ENCODE measurements at regions of chr9 and their contacts with region 1.

Region 1: DNA sequence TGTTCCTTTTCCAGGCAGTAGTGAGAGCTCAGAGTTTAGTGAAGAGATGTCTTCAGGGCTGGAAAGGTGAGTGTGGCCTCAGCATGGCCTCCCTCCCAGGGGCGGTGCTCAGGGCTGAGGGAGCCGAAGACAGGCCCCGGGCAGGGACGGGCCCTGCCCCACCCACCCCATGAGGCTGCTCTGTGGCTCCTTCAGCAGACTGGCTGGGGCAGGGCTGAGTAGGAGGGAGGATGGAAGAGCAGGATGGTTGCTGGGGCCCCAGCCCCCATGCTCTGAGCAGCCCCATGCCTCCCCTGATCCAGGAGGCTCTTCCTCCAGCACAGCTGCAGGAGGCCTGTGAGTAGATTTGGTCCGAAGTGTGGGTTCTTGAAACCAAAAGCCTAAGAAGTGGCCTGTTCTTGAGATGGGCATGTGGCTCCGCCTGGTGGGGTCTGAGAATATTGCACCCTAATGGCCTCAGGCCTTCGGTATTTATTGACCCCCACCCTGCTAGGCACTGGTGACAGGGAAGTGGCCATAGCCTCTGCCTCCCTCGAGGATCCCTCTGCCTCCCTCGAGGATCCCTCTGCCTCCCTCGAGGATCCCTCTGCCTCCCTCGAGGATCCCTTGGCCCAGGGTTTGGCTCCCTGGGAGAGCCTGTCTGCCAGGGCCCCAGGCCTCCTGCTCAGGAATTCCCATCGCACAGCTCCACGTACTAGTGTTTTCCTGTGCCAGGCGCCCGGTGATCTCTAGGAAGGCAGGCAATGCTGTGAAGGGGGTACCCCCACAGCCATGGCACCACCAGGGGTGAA is 65.4 kb upstream of the GARNL3 start:
- DNase-seq: peak; percentile 61 to 86 (median 72)
- ATAC-seq: peak; percentile 72
- H3K4me3 ChIP-seq: no peak overlapping the region
- H3K4me3 Mint-ChIP-seq: no peak overlapping the region
- H3K27ac ChIP-seq: no peak overlapping the region
- H3K27ac Mint-ChIP-seq: no peak overlapping the region
- H3K4me1 ChIP-seq: peaks cover 17% of the 10 kb centered on the region
- H3K4me1 Mint-ChIP-seq: peaks cover 10% of the 10 kb centered on the region
- H3K27me3 ChIP-seq: peaks cover 4 to 5% of the 10 kb centered on the region in 2 experiments
- H3K27me3 Mint-ChIP-seq: peaks cover 28% of the 10 kb centered on the region
- CTCF ChIP-seq: peak; percentile 88

Region 2: GRCh38 chr9:126939821-126940221 is 259.4 kb before region 1 on chr9:
- CTCF ChIA-PET with region 1: interaction called, 34 read pairs
- POLR2A ChIA-PET with region 1: interaction called, 4 read pairs
- intact Hi-C with region 1: loop called (anchors 1 kb)
- DNase-seq: no peak
- ATAC-seq: no peak
- H3K4me3 ChIP-seq: no peak overlapping the region
- H3K4me3 Mint-ChIP-seq: no peak overlapping the region
- H3K27ac ChIP-seq: no peak overlapping the region
- H3K27ac Mint-ChIP-seq: no peak overlapping the region
- H3K4me1 ChIP-seq: peaks cover 2% of the 10 kb centered on the region
- H3K4me1 Mint-ChIP-seq: peaks cover 6% of the 10 kb centered on the region
- H3K27me3 ChIP-seq: peaks cover 3 to 4% of the 10 kb centered on the region in 2 experiments
- H3K27me3 Mint-ChIP-seq: peaks cover 13% of the 10 kb centered on the region
- CTCF ChIP-seq: no peak

Region 3: GRCh38 chr9:126965541-126966428 is 233.4 kb before region 1 on chr9:
- CTCF ChIA-PET with region 1: interaction called, 6 read pairs
- POLR2A ChIA-PET with region 1: no interaction called
- intact Hi-C with region 1: loop called (anchors 1 kb)
- DNase-seq: peak; percentile 27 to 73 (median 40)
- ATAC-seq: peak; percentile 69
- H3K4me3 ChIP-seq: no peak overlapping the region
- H3K4me3 Mint-ChIP-seq: no peak overlapping the region
- H3K27ac ChIP-seq: no peak overlapping the region
- H3K27ac Mint-ChIP-seq: no peak overlapping the region
- H3K4me1 ChIP-seq: no peaks in the 10 kb centered on the region
- H3K4me1 Mint-ChIP-seq: no peaks in the 10 kb centered on the region
- H3K27me3 ChIP-seq: no peaks in the 10 kb centered on the region
- H3K27me3 Mint-ChIP-seq: peaks cover 30% of the 10 kb centered on the region
- CTCF ChIP-seq: peak; percentile 71

Region 4: DNA sequence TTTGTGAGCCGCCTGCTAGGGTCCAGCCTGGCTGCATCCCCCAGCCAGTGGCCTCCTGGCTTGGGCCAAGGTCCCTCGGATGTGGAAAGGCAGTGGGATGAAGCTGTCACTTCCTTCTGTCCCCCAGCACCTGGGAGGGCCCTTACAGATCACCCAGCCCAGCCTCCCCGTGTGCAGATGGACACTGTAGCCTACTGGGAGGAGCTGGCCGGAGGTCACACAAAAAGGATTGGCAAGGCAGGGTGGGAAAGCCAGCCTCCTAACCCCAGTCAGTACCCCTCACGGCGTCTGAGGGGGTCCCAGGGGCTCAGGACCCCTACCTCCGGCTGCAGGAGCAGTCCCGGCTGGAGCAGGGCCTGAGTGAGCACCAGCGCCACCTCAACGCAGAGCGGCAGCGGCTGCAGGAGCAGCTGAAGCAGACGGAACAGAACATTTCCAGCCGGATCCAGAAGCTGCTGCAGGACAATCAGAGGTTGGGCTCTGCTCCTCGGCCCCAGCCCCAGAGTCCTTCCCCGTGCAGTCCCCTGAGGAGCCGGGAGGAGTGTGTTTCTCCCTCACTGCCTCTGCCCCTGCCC is 280.4 kb after region 1 on chr9:
- CTCF ChIA-PET with region 1: no interaction called
- POLR2A ChIA-PET with region 1: no interaction called
- intact Hi-C with region 1: no loop called
- DNase-seq: no peak
- ATAC-seq: no peak
- H3K4me3 ChIP-seq: no peak overlapping the region
- H3K4me3 Mint-ChIP-seq: no peak overlapping the region
- H3K27ac ChIP-seq: no peak overlapping the region
- H3K27ac Mint-ChIP-seq: no peak overlapping the region
- H3K4me1 ChIP-seq: no peaks in the 10 kb centered on the region
- H3K4me1 Mint-ChIP-seq: no peaks in the 10 kb centered on the region
- H3K27me3 ChIP-seq: no peaks in the 10 kb centered on the region
- H3K27me3 Mint-ChIP-seq: no peaks in the 10 kb centered on the region
- CTCF ChIP-seq: no peak